PC-3 (cell line): ENCODE measurements at regions of chr11 and their contacts with region 1.

Region 1: GRCh38 chr11:5791165-5791564 is at the start of gene OR52N1:
- DNase-seq: no peak
- ATAC-seq: no peak
- H3K4me3 ChIP-seq: no peak within 1 kb of the TSS
- H3K27ac ChIP-seq: no peak within 1 kb of the TSS
- H3K4me1 ChIP-seq: no peaks in the 10 kb centered on the region
- H3K27me3 ChIP-seq: no peaks in the 10 kb centered on the region
- CTCF ChIP-seq: no peak
- total RNA-seq, gene OR52N1: not detected in 2 replicates

Region 2: DNA sequence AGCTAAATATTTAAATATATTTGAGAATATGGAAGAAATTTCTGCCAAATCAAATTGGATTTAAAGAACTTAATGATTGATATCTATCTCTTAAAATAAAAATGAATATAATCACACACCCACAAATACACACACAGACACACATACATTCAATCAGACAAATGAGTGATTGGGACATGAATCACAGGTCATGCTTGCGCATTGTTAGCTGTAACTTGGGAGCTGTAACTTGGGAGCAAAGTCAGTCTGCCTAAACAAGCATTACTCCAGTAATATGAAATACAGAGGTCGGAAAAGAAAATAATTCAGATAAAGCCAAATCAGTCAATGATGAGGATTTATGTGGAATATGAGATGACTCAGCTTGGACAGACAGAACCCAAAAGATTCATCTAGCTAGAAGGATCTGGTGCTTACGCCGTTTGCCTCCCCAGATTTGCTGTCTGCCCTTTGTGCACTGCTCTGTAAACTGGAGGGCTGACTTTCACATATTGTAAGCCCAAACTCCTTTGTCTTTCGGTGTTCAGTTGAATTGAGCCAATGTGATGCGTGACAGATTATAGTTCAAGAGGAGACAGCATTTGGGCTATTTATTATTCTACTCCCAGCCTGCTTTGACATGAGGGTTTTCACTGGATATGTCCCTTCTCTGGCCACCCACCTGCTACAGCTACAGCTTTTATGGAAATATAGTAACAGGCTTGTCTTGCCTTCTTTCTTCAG is 53.3 kb before region 1 on chr11:
- CTCF ChIA-PET with region 1: no interaction called
- POLR2A ChIA-PET with region 1: no interaction called
- intact Hi-C with region 1: no loop called
- DNase-seq: no peak
- ATAC-seq: no peak
- H3K4me3 ChIP-seq: no peak overlapping the region
- H3K27ac ChIP-seq: no peak overlapping the region
- H3K4me1 ChIP-seq: no peaks in the 10 kb centered on the region
- H3K27me3 ChIP-seq: peaks cover 14% of the 10 kb centered on the region
- CTCF ChIP-seq: no peak

Region 3: GRCh38 chr11:5767056-5767455 is 24.1 kb before region 1 on chr11:
- CTCF ChIA-PET with region 1: no interaction called
- POLR2A ChIA-PET with region 1: no interaction called
- intact Hi-C with region 1: loop called (anchors 1 kb)
- DNase-seq: no peak
- ATAC-seq: no peak
- H3K4me3 ChIP-seq: no peak overlapping the region
- H3K27ac ChIP-seq: no peak overlapping the region
- H3K4me1 ChIP-seq: no peaks in the 10 kb centered on the region
- H3K27me3 ChIP-seq: peaks cover 8% of the 10 kb centered on the region; the same call in 1 of the 2 replicates
- CTCF ChIP-seq: no peak